GM12878 (cell line): ENCODE measurements at regions of chr6 and their contacts with region 1.

Region 1: DNA sequence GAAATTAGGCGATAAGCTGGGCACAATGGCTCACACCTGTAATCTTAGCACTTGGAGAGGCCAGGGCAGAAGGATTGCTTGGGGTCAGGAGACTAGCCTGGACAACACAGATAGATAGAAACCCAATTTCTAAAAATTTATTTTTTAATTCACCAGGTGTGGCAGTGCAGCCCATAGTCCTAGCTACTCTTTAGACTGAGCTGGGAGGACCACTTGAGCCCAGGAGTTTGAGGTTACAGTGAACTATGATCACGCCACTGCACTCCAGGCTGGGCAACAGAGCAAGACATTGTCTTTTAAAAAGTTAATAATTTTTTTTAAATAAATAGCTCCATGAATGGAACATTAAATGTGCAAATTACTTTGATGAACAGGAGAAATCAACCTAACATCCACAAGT is 8.2 kb downstream of the ZNF318 start:
- DNase-seq: no peak
- ATAC-seq: peak; percentile 68
- H3K4me3 ChIP-seq: peak overlapping the region; percentile 24; the same call in 1 of the 2 replicates
- H3K27ac ChIP-seq: no peak overlapping the region
- H3K4me1 ChIP-seq: peaks cover 10% of the 10 kb centered on the region
- H3K27me3 ChIP-seq: no peaks in the 10 kb centered on the region
- CTCF ChIP-seq: peak in 1 of 3 experiments; percentile 17; a peak in 1 of 6 replicates
- EP300 ChIP-seq: no peak
- POLR2A ChIP-seq: no peak
- RAD21 ChIP-seq: peak; percentile 28; the same call in 1 of the 2 replicates

Region 2: GRCh38 chr6:43308101-43308989 is 52.9 kb before region 1 on chr6 and contains the start of gene CRIP3:
- CTCF ChIA-PET with region 1: interaction called, 29 read pairs
- POLR2A ChIA-PET with region 1: interaction called, 5 read pairs
- RAD21 ChIA-PET with region 1: interaction called, 18 read pairs
- SMC1A ChIA-PET with region 1: interaction called, 22 read pairs
- in situ Hi-C with region 1: no loop called
- intact Hi-C with region 1: no loop called
- DNase-seq: no peak
- ATAC-seq: peak; percentile 92
- H3K4me3 ChIP-seq: peak within 1 kb of the TSS; percentile 57; the same call in 1 of the 2 replicates
- H3K27ac ChIP-seq: no peak within 1 kb of the TSS
- H3K4me1 ChIP-seq: peaks cover 8% of the 10 kb centered on the region
- H3K27me3 ChIP-seq: no peaks in the 10 kb centered on the region
- CTCF ChIP-seq: peak; percentile 49 to 79 (median 50)
- EP300 ChIP-seq: no peak
- POLR2A ChIP-seq: no peak
- RAD21 ChIP-seq: 0 out of 2 replicates have a peak, but pooled peaks have one; percentile 8
- polyA plus RNA-seq, gene CRIP3: 1.7 to 2.3 TPM

Region 3: GRCh38 chr6:43347021-43347420 is 14.2 kb before region 1 on chr6:
- CTCF ChIA-PET with region 1: interaction called, 6 read pairs
- POLR2A ChIA-PET with region 1: interaction called, 3 read pairs
- RAD21 ChIA-PET with region 1: interaction called, 5 read pairs
- SMC1A ChIA-PET with region 1: interaction called, 238 read pairs
- in situ Hi-C with region 1: no loop called
- intact Hi-C with region 1: no loop called
- DNase-seq: no peak
- ATAC-seq: peak; percentile 60
- H3K4me3 ChIP-seq: no peak overlapping the region
- H3K27ac ChIP-seq: no peak overlapping the region; the same call in 1 of the 2 replicates
- H3K4me1 ChIP-seq: peaks cover 17% of the 10 kb centered on the region
- H3K27me3 ChIP-seq: no peaks in the 10 kb centered on the region
- CTCF ChIP-seq: no peak
- EP300 ChIP-seq: no peak
- POLR2A ChIP-seq: no peak
- RAD21 ChIP-seq: no peak

Region 4: GRCh38 chr6:43386492-43386891 is 25.2 kb after region 1 on chr6:
- CTCF ChIA-PET with region 1: interaction called, 15 read pairs
- POLR2A ChIA-PET with region 1: interaction called, 218 read pairs
- RAD21 ChIA-PET with region 1: interaction called, 311 read pairs
- SMC1A ChIA-PET with region 1: interaction called, 616 read pairs
- in situ Hi-C with region 1: no loop called
- intact Hi-C with region 1: no loop called
- DNase-seq: no peak
- ATAC-seq: no peak
- H3K4me3 ChIP-seq: no peak overlapping the region
- H3K27ac ChIP-seq: peak overlapping the region; percentile 86; the same call in 1 of the 2 replicates
- H3K4me1 ChIP-seq: peaks cover 41% of the 10 kb centered on the region
- H3K27me3 ChIP-seq: no peaks in the 10 kb centered on the region
- CTCF ChIP-seq: peak; percentile 20 to 47 (median 39); a peak in 4 of 6 replicates
- EP300 ChIP-seq: no peak
- POLR2A ChIP-seq: no peak
- RAD21 ChIP-seq: peak; percentile 54; the same call in 1 of the 2 replicates

Region 5: GRCh38 chr6:44464527-44465310 is 1103.5 kb after region 1 on chr6:
- CTCF ChIA-PET with region 1: no interaction called
- POLR2A ChIA-PET with region 1: no interaction called
- RAD21 ChIA-PET with region 1: no interaction called
- SMC1A ChIA-PET with region 1: no interaction called
- in situ Hi-C with region 1: no loop called
- intact Hi-C with region 1: no loop called
- DNase-seq: no peak
- ATAC-seq: no peak
- H3K4me3 ChIP-seq: no peak overlapping the region
- H3K27ac ChIP-seq: no peak overlapping the region
- H3K4me1 ChIP-seq: no peaks in the 10 kb centered on the region
- H3K27me3 ChIP-seq: no peaks in the 10 kb centered on the region
- CTCF ChIP-seq: no peak
- EP300 ChIP-seq: no peak
- POLR2A ChIP-seq: no peak
- RAD21 ChIP-seq: no peak